GM10248 (cell line): ENCODE measurements at regions of chr6 and their contacts with region 1.

Region 1: DNA sequence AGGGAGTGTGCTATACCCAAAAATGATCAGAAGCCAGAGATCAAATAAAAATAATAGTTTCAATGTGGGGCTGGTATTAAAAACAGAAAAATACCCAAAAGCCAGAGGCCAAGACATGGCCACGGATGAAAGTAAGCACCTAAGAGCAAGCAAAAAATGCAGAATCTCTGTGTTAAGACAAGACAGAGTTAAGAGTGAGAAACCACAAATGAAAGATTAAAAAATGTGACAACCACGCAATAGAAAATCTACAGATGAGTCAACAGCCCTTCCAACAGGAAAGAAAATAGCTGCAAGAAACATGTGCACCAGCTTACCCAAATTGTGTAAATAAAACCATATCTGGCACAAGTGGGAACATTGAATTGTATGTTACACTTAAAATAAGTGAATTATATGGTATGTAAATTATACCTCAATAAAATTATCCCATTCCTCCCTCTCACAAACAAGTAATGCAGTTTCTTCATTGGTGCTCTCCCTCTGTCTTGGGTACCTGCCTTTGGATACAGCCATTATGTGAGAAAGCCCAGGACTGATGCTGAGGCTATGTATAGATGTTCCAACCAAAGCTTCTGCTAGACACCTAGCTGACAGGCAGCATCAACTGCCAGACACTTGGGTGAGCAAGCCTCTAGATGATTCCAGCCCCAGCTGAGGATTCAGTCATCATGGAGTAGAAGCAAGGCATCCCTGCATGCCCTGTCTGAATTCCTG is 55.3 kb upstream of the UFL1 start:
- DNase-seq: no peak
- CTCF ChIP-seq: no peak

Region 2: DNA sequence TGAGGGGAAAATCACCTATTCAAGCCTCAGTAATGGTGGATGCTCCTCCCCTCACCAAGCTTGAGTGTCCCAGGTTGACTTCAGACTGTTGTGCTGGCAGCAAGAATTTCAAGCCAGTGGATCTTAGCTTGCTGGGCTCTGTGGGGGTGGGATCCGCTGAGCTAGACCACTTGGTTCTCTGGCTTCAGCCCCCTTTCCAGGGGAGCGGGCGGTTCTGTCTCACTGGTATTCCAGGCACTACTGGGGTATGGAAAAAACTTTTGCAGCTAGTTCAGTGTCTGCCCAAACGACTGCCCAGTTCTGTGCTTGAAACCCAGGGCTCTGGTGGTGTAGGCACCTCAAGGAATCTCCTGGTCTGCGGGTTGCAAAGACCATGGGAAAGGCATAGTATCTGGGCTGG is 12.4 kb after region 1 on chr6:
- CTCF ChIA-PET with region 1: interaction called, 10 read pairs
- POLR2A ChIA-PET with region 1: no interaction called
- DNase-seq: no peak
- CTCF ChIP-seq: no peak